ENCODE measurements at regions of chr5 and their contacts with region 1.

Region 1: DNA sequence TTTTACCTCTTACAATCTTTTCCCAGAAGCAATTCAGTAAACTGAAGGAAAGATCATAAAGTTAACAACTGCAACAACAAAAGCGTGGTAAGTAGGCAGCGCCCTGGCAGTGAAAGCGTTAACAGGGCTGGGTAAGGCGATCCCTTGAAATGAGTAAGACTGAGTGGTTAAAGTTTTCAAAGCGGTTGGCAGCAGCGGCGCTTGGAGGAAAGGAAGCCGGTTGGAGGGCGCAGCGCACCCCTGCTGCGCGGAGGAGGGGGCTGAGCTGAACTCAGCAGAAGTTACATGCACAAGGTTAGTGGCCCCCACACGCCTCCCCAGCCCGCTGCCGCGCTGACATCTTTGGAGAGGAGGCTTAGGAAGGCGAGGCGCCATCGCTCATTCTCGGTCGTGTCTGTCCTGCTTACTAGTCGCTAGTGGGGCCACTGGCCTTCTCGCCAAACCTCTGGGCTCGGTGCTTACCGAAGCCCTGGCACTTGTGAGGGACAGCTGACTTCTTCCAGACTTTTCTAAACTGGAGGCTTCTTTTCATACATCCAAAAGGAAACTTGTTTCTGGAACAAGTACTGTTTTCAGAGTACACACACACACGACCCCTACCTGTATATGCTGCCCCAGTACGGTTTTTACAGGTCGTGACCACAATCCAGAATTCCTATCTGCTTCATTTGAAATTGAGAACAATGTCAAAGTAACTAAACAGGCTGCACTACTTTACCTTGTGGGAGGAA is at the start of gene SH3RF2:
- DNase-seq: peak; percentile 85 to 89
- H3K4me3 ChIP-seq: peak within 1 kb of the TSS; percentile 77
- H3K27ac ChIP-seq: peak within 1 kb of the TSS; percentile 92
- H3K4me1 ChIP-seq: peaks cover 61% of the 10 kb centered on the region
- H3K27me3 ChIP-seq: no peaks in the 10 kb centered on the region
- CTCF ChIP-seq: no peak
- total RNA-seq, gene SH3RF2: 30.9 and 37.2 TPM in 2 replicates

Region 2: GRCh38 chr5:145834917-145835847 is 101.4 kb before region 1 on chr5 and contains the start of gene PRELID2:
- CTCF ChIA-PET with region 1: no interaction called
- POLR2A ChIA-PET with region 1: no interaction called
- intact Hi-C with region 1: loop called (anchors 1 kb)
- DNase-seq: peak; percentile 80 to 94
- H3K4me3 ChIP-seq: peak within 1 kb of the TSS; percentile 71
- H3K27ac ChIP-seq: peak within 1 kb of the TSS; percentile 35
- H3K4me1 ChIP-seq: peaks cover 25% of the 10 kb centered on the region
- H3K27me3 ChIP-seq: no peaks in the 10 kb centered on the region
- CTCF ChIP-seq: 0 out of 2 replicates have a peak, but pooled peaks have one; percentile 2
- total RNA-seq, gene PRELID2: 24.8 and 27.7 TPM in 2 replicates

Region 3: GRCh38 chr5:145965804-145966203 is 29.2 kb after region 1 on chr5:
- CTCF ChIA-PET with region 1: no interaction called
- POLR2A ChIA-PET with region 1: interaction called, 6 read pairs
- intact Hi-C with region 1: loop called (anchors 2 kb)
- DNase-seq: no peak
- H3K4me3 ChIP-seq: no peak overlapping the region
- H3K27ac ChIP-seq: no peak overlapping the region
- H3K4me1 ChIP-seq: peaks cover 15% of the 10 kb centered on the region
- H3K27me3 ChIP-seq: no peaks in the 10 kb centered on the region
- CTCF ChIP-seq: no peak

Region 4: DNA sequence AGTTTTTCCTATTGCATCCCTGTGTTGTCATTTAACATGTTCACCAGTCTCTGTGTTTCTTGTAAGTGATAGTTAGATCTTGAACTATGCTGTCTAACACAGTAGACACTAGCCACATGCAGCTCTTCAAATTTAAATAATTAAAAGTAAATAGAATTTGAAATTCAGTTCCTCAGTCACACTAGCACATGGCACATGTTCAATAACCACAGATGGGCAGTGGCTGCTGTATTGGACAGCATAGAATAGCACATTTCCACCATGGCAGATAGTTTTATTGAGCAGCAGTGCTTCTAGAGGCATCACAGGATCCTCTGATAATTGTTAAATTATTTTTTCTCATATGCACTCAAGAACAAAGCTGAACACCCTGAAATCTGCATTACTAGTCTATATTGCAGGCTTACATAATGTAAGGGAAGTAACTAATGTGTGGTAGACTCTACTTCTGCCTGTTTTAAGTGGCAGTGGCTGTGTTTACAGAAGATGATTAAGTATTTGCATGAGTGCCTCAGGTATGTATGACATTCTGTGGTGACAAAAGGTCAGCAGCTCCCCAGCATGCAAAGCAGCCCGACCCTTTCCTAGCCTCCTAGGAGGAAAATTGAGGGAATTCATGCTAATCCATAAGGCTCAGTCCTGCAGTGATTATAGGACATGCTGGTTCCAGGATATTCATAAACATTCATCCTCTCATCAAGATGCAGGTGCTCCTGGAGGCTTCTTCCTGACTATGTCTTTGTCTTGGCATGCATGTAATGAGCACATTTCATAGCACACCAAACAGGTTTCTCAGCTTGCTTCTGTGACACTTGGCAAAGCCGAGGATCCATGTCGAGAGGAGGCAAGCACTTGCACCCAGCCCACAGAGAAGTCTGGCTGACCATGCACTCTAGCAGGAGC is 45.3 kb after region 1 on chr5:
- CTCF ChIA-PET with region 1: no interaction called
- POLR2A ChIA-PET with region 1: interaction called, 7 read pairs
- intact Hi-C with region 1: loop called (anchors 2 kb)
- DNase-seq: peak; percentile 70 to 89
- H3K4me3 ChIP-seq: no peak overlapping the region
- H3K27ac ChIP-seq: peak overlapping the region; percentile 57
- H3K4me1 ChIP-seq: peaks cover 48% of the 10 kb centered on the region
- H3K27me3 ChIP-seq: no peaks in the 10 kb centered on the region
- CTCF ChIP-seq: no peak

Region 5: DNA sequence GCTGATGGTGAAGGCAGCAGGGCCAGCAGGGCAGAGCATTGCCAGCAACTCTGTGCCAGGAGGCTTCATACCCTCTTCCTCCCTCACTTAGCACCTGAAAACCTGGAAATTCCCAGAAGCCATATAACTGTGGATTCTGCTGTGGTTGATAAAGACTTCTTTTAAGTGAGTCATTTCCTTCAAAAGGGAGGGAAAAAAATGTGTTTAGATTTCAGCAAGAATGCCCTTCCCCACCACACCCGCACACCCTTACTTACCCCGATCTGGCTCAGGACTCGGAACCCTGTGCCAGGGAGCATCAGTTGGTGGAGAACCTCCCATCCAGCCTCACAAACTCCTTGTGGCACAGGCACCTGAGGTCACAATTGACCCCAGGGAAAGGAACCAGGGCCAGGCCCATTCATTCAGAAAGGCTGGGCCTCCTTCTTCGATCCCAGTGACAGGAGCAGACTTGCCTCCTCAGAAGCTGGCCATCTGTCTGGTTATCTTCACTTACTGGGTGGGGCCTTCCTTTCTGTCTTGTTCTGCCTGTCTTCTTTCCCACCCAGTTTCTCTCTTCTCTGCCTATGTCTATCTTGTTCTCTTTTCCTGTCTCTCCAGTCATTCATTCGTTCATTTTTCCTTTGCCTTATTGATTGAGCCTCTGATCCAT is 106.2 kb after region 1 on chr5:
- CTCF ChIA-PET with region 1: interaction called, 4 read pairs
- POLR2A ChIA-PET with region 1: no interaction called
- intact Hi-C with region 1: loop called (anchors 1 kb)
- DNase-seq: peak; percentile 66 to 83
- H3K4me3 ChIP-seq: no peak overlapping the region
- H3K27ac ChIP-seq: peak overlapping the region; percentile 48
- H3K4me1 ChIP-seq: peaks cover 19% of the 10 kb centered on the region
- H3K27me3 ChIP-seq: no peaks in the 10 kb centered on the region
- CTCF ChIP-seq: no peak

Region 6: GRCh38 chr5:146203011-146203871 is 266.7 kb after region 1 on chr5 and contains the start of gene RBM27:
- CTCF ChIA-PET with region 1: interaction called, 21 read pairs
- POLR2A ChIA-PET with region 1: no interaction called
- intact Hi-C with region 1: no loop called
- DNase-seq: peak; percentile 96 to 100
- H3K4me3 ChIP-seq: peak within 1 kb of the TSS; percentile 96
- H3K27ac ChIP-seq: peak within 1 kb of the TSS; percentile 75
- H3K4me1 ChIP-seq: peaks cover 33% of the 10 kb centered on the region
- H3K27me3 ChIP-seq: no peaks in the 10 kb centered on the region
- CTCF ChIP-seq: no peak
- total RNA-seq, gene RBM27: 12.0 and 25.1 TPM in 2 replicates

Region 7: GRCh38 chr5:146653560-146653959 is 717.0 kb after region 1 on chr5:
- CTCF ChIA-PET with region 1: no interaction called
- POLR2A ChIA-PET with region 1: no interaction called
- intact Hi-C with region 1: no loop called
- DNase-seq: no peak
- H3K4me3 ChIP-seq: no peak overlapping the region
- H3K27ac ChIP-seq: no peak overlapping the region
- H3K4me1 ChIP-seq: no peaks in the 10 kb centered on the region
- H3K27me3 ChIP-seq: peaks cover 64% of the 10 kb centered on the region
- CTCF ChIP-seq: no peak